Mammary epithelial cell (primary cell): ENCODE measurements at regions of chr2 and their contacts with region 1.

Region 1: DNA sequence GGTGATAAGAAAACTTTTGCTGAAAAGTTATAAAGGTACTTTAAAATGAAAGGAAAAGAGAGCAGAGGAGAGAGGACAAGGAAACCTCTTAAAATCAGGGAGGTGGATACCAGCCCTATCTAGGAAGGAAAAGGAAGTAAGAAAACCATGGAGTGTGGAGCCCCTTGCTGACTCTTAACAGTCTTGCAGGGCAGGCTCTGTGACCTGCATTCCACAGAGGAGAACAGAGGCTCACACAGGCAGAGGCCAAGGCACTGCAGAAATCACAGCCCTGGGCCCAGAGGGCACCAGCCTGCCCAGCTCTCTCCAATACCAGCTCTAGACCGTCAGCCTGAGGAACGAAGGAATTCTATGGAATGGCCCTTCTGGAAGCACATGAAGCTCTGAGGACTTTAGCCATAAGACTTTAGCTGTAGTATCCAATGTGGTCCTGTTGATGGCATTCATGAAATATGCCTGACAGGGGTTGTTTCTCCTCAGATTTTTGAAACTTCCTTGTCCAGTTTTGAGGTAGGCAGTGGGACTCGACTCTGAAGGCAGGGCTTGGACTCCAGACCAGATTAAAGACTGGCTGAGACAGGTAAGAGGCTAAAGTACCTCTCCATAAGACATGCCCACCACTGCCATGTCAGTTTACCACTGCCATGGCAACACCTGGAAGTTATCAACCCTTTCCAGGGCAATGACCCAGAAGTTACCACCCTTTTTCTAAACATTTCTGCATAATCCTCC is 216.3 kb downstream of the ANAPC1 start:
- DNase-seq: peak; percentile 60
- H3K4me3 ChIP-seq: no peak overlapping the region
- H3K27ac ChIP-seq: no peak overlapping the region
- H3K4me1 ChIP-seq: peaks cover 8% of the 10 kb centered on the region
- H3K27me3 ChIP-seq: no peaks in the 10 kb centered on the region
- CTCF ChIP-seq: peak; percentile 66 to 76

Region 2: DNA sequence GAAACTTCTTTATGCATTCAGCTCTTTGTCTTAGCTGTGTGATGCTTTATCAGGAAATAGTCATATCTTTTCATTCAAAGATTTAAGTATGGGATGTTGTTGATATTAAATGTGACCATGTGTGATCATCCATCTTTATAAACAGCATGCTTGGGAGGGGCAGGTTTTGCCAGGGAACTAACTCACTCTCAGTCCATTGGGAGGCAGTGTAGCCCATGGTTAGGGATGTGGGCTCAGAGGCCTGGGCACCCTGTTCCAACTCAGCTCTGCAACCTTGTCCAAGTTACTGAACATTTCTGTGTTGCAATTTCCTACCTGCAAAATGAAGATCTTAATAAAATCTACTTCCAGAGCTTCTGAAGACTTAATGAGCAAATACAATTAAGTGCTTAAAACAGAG is 639.0 kb before region 1 on chr2:
- CTCF ChIA-PET with region 1: no interaction called
- dilution Hi-C with region 1: no loop called
- in situ Hi-C with region 1: no loop called
- intact Hi-C with region 1: loop called (anchors 1 kb)
- DNase-seq: peak; percentile 23
- H3K4me3 ChIP-seq: no peak overlapping the region
- H3K27ac ChIP-seq: no peak overlapping the region
- H3K4me1 ChIP-seq: peaks cover 13% of the 10 kb centered on the region
- H3K27me3 ChIP-seq: no peaks in the 10 kb centered on the region
- CTCF ChIP-seq: peak; percentile 35 to 51

Region 3: DNA sequence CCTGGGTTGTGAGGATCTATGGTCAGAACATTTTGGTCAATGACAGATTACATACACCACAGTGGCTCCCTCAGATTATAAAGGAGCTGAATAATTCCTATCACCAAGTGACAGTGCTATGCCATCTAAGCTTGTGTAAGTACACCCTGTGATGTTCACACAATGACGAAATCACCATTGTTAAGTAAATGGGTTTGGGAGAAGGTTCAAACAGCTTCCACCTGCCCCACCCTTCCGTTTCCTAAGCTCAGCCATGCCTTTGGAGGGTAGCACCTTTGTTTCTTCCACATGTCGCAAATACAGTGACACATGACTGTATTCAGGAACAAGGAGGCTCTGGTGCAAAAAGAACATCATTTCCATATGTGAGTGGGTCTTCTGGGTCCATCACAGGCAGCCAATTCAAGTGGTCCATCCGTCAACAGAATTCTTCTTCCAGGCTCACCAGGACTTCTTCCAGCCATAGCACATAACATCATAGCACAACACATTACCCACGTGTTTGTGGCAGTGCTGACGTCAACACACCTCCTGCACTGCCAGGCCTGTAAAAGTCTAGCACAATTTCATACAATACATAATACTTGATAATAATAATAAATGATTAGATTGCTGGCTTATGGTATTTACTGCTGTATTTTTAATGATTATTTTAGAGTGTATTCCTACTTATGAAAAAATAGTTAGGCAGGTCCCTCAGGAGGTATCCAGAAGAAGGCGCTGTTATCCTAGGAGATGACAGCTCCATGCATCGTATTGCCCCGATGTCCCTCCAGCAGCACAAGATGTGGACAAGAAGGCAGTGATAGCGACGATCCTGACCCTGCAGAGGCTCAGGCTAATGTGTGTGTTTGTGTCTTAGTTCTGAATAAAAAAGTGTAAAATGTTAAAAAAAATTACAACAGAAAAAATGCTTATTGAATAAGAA is 48.5 kb before region 1 on chr2:
- CTCF ChIA-PET with region 1: interaction called, 10 read pairs
- dilution Hi-C with region 1: no loop called
- in situ Hi-C with region 1: no loop called
- intact Hi-C with region 1: loop called (anchors 1 kb)
- DNase-seq: no peak
- H3K4me3 ChIP-seq: no peak overlapping the region
- H3K27ac ChIP-seq: no peak overlapping the region
- H3K4me1 ChIP-seq: peaks cover 27% of the 10 kb centered on the region
- H3K27me3 ChIP-seq: no peaks in the 10 kb centered on the region
- CTCF ChIP-seq: peak in 1 of 2 donors; percentile 38

Region 4: GRCh38 chr2:111698743-111699554 is 31.2 kb after region 1 on chr2:
- CTCF ChIA-PET with region 1: no interaction called
- dilution Hi-C with region 1: no loop called
- in situ Hi-C with region 1: no loop called
- intact Hi-C with region 1: loop called (anchors 2 kb)
- DNase-seq: peak; percentile 99
- H3K4me3 ChIP-seq: peak overlapping the region in 1 of 3 experiments; percentile 6
- H3K27ac ChIP-seq: peak overlapping the region; percentile 73
- H3K4me1 ChIP-seq: peaks cover 50% of the 10 kb centered on the region
- H3K27me3 ChIP-seq: no peaks in the 10 kb centered on the region
- CTCF ChIP-seq: peak; percentile 45 to 54